Naive thymus-derived CD4-positive, alpha-beta T cell (primary cell): ENCODE measurements at regions of chr17 and their contacts with region 1.

Region 1: DNA sequence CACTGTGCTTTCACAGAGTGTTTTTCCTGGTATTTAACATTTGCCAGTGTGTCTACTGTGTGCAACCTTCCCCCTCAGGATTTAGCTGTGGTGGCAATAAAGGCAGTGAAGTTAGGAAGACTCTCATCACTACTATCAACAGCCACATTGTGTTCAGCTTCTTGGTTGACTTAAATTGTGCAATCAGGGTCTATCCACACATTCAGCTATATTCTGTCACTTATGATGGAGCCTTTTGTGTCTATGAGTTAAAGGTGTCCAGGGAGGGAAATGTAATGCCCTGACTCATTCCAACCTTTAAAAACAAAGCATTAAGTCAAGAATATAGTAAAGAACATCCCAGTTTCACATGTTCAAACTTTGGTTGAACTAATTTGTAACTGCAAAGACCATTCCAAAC is 176.3 kb downstream of the CA10 start:
- DNase-seq: no peak
- ATAC-seq: no peak
- H3K4me3 ChIP-seq: no peak overlapping the region
- H3K4me3 Mint-ChIP-seq: no peak overlapping the region
- H3K27ac ChIP-seq: no peak overlapping the region
- H3K27ac Mint-ChIP-seq: no peak overlapping the region
- H3K4me1 ChIP-seq: no peaks in the 10 kb centered on the region
- H3K4me1 Mint-ChIP-seq: no peaks in the 10 kb centered on the region
- H3K27me3 ChIP-seq: no peaks in the 10 kb centered on the region
- H3K27me3 Mint-ChIP-seq: peaks cover 0 to 29% (median 20%) of the 10 kb centered on the region in 5 donors

Region 2: DNA sequence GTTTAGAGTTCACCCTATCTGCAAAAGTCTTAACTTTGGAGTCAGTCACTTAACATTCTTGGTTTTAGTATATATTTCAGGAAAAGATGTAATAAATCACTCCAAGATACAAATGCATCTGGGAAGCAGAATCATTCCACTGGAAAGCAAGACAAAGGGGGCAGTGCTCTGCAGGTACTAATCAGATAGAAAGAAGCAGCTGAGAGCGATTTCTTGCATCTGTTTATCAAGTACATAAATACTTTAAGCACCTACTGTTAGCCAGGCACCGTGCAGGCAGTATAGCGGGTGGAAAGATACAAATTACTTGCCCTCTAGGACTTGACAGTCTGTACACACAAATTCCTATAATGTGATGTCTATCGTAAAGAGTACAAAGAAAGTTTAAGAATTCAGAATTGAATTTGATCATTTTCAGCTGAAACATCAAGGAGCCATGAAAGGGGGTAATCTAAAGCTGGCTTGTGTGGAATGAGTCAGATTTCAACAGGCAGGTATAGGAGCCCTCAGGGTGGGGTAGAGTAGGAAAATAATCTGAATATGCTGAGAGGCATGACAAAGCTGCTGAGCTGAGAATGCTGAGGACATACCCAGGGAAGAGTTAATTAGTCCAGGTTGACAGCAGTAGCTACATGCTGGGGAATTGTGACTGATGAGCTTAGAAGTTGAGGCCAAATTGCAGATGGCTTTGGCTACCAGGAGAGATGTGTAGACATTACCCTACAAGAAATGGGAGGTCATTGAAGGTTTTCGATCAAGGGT is 66.1 kb after region 1 on chr17:
- CTCF ChIA-PET with region 1: no interaction called
- POLR2A ChIA-PET with region 1: no interaction called
- intact Hi-C with region 1: loop called in 1 of 2 experiments (anchors 10 kb)
- DNase-seq: no peak
- ATAC-seq: no peak
- H3K4me3 ChIP-seq: no peak overlapping the region
- H3K4me3 Mint-ChIP-seq: no peak overlapping the region
- H3K27ac ChIP-seq: no peak overlapping the region
- H3K27ac Mint-ChIP-seq: no peak overlapping the region
- H3K4me1 ChIP-seq: no peaks in the 10 kb centered on the region
- H3K4me1 Mint-ChIP-seq: no peaks in the 10 kb centered on the region
- H3K27me3 ChIP-seq: no peaks in the 10 kb centered on the region
- H3K27me3 Mint-ChIP-seq: peaks cover 0 to 27% (median 20%) of the 10 kb centered on the region in 5 donors